Activated CD8-positive, alpha-beta memory T cell treated with anti-CD3 and anti-CD28 coated beads, Interleukin-2, amount 10 ng/mL, durations not matched to agents 7 days and 5 days (primary cell): ENCODE measurements at regions of chr20 and their contacts with region 1.

Region 1: DNA sequence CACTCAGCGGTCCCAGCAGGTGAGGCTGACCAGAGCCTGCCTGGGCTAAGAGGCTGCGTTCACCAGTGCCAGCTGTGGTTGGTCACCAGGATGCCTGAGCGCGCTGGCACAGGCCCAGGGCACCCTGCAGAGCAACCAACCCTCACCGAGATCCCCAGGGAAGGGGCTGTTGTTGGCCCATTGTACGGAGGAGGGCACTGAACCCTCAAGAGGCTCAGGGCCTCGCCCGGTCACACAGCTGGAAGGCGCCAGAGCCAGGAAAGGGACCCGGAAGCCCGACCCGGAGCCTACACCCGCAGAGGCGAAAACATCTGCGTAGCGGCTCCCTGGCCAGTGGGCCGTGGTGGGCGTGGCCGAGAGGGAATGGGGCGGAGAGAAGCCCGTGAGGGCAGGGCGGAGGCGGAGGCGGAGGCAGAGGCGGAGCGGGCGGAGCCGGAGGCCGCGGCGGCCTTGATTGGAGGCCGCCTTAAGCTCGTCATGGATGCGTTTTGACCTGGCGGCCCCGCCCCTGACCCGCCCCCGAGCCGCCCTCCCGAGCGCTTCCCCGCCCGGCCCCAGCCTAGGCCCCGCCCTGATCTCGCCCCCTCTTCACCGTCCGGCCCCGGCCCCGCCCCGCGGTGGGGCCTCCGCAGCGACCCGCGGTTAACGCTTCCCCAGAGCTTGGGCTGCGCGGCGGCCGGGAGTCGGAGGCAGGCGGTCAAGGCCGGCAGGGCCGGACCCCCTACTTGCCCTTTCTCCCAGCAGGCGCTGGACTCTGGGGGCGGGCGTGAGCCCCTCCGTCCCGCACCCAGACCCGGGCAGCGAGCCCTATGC is 2.2 kb upstream of the MRGBP start:
- DNase-seq: peak; percentile 98
- ATAC-seq: peak; percentile 82
- H3K4me3 Mint-ChIP-seq: peak overlapping the region; percentile 77
- H3K27ac Mint-ChIP-seq: peak overlapping the region; percentile 90
- H3K4me1 Mint-ChIP-seq: peaks cover 32% of the 10 kb centered on the region
- H3K27me3 Mint-ChIP-seq: no peaks in the 10 kb centered on the region

Region 2: DNA sequence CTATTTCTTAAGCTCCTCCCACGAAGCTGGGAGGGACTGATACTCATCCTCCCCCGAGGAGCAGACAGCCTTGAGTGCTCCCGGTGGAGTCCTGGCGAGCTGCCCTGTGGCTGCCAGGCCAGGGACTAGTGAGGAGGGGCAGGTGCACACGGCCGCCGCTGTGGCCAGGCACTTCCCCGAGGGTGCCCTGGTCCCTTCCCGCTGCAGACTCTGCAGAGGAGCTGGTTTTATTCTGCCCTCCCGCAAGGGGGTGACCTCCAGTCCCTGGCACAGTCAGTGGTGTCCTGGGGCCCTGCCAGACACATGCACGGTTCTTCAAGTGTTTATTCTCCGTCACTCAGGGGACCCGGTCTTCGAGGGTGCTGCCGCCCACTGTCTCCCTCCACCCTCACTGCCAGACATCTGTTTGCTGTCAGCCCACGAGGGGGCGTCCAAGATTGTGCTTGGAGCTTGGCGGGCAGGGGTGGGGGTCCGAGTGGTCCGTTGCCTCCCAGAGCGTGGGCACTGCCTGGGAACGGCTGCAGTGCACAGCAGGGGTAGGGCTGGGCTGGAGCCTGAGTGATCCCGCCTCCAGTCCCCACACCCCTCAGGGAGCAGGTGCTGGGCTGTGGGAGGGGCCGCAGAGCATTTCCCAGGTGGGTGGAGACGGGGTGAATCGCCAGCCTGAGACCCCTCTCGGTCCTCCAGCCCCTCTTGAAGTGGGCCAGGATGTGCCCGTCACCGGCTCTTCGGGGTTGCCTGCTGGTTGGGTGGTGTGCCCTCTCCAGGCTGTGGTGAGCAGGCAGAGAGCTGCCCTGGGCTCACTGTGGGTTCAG is 384.0 kb before region 1 on chr20:
- CTCF ChIA-PET with region 1: interaction called, 12 read pairs
- DNase-seq: no peak
- ATAC-seq: no peak
- H3K4me3 Mint-ChIP-seq: no peak overlapping the region
- H3K27ac Mint-ChIP-seq: no peak overlapping the region
- H3K4me1 Mint-ChIP-seq: peaks cover 23% of the 10 kb centered on the region
- H3K27me3 Mint-ChIP-seq: peaks cover 4% of the 10 kb centered on the region

Region 3: DNA sequence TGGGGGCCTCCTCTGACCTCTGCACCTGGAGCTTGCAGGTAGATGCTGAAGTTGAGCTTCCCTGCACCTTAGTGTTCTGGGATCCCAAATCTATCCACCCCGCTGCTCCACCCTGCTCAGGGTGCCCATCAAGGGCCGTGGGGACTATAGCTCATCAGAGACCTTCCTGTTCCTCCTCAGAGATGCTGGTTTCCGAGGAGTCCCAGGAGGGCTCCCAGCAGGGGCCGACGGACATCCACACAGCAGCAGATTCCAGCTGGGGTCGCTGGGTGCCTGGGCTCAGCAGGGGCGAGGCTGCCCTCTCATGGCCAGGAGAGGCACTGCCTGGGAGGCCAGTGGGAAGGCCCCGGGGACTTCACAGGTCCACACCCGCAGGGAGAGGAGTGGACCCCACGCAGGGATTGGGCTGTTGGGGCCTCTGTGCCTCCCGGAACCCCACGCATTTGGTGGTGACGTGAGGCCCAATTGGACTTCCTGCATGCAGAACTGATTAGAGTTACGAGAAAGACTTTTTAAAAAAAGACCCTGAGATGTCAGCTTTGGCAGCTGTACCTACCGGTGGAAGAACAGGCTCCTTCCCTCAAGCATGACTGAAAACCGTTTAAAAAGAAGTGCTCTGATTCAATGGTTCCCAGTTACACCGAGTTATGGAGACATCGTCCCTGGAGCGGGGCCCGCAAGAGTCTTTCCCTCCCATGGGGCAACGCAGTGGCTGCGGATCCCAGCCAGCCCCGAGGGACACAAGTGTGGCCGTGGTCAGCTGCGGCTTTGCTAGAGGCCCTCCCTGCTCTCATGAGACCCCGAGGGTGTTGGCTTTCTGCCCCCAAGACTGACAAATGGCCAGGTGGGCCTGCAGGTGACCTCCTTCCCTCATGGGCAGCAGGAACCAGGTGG is 177.1 kb before region 1 on chr20:
- CTCF ChIA-PET with region 1: interaction called, 11 read pairs
- DNase-seq: peak; percentile 85
- ATAC-seq: peak; percentile 65
- H3K4me3 Mint-ChIP-seq: no peak overlapping the region
- H3K27ac Mint-ChIP-seq: peak overlapping the region; percentile 98
- H3K4me1 Mint-ChIP-seq: peaks cover 36% of the 10 kb centered on the region
- H3K27me3 Mint-ChIP-seq: peaks cover 8% of the 10 kb centered on the region

Region 4: DNA sequence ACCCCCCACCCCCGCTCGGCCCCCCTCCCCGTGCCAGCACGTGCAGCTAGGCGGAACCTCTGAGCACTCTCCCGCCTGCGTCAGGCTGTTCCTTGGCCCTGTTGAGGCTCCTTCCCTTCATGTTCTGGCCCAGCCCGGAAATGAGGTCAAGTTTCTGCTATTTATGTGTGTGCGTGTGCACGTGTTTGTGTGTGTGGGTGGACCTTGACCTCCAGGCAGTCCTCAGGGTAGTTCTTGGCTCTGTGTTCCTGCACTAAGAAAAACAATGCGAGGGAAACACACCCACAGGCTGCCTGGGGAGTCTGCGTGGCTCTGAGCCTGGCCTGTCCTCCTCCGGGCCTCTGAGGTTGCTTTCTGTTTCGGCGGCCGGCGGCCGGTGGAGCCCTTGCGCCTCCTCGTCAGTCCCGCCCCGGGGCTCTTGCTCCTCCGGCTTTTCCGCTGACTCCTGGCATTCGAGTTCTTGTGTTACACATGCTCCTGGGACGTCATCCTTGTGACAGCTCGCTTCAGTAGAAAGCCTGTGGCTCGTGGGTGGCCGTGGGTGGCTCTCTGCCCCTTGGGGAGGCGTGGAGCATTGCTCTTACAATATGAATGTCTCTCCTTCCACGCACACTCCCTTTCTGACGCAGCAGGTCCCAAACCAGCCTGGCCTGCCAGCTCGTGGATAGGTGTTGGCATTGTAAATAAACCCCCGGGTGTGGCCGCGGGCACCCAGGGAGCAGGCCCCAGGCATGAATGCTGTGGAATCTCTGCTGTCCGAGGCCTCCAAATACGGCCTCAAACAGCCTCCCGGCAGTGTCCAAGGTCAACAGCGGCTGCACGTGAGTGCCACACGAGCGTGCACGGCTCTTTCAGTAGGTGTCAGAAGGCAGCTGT is 141.8 kb before region 1 on chr20:
- CTCF ChIA-PET with region 1: interaction called, 15 read pairs
- DNase-seq: peak; percentile 88
- ATAC-seq: peak; percentile 64
- H3K4me3 Mint-ChIP-seq: peak overlapping the region; percentile 75
- H3K27ac Mint-ChIP-seq: peak overlapping the region; percentile 96
- H3K4me1 Mint-ChIP-seq: peaks cover 60% of the 10 kb centered on the region
- H3K27me3 Mint-ChIP-seq: no peaks in the 10 kb centered on the region

Region 5: DNA sequence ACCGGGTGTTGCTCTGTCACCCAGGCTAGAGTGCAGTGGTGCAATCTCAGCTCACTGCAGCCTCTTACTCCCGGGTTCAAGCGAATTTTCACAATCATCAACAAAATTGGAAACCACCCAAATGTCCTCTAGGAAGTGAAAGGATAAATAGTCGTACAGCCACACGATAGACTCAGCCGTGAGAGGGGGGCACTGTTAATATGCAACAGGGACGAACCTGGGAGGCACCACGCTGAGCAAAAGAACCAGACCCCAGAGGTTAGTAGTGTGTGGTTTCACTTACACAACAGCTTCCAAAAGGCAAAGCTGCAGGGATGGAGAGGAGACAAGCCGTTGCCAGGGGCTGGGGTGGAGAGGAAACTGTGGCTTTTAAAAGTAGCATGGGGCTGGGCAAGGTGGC is 115.6 kb before region 1 on chr20:
- CTCF ChIA-PET with region 1: interaction called, 23 read pairs
- DNase-seq: no peak
- ATAC-seq: peak; percentile 46
- H3K4me3 Mint-ChIP-seq: no peak overlapping the region
- H3K27ac Mint-ChIP-seq: no peak overlapping the region
- H3K4me1 Mint-ChIP-seq: peaks cover 15% of the 10 kb centered on the region
- H3K27me3 Mint-ChIP-seq: no peaks in the 10 kb centered on the region

Region 6: DNA sequence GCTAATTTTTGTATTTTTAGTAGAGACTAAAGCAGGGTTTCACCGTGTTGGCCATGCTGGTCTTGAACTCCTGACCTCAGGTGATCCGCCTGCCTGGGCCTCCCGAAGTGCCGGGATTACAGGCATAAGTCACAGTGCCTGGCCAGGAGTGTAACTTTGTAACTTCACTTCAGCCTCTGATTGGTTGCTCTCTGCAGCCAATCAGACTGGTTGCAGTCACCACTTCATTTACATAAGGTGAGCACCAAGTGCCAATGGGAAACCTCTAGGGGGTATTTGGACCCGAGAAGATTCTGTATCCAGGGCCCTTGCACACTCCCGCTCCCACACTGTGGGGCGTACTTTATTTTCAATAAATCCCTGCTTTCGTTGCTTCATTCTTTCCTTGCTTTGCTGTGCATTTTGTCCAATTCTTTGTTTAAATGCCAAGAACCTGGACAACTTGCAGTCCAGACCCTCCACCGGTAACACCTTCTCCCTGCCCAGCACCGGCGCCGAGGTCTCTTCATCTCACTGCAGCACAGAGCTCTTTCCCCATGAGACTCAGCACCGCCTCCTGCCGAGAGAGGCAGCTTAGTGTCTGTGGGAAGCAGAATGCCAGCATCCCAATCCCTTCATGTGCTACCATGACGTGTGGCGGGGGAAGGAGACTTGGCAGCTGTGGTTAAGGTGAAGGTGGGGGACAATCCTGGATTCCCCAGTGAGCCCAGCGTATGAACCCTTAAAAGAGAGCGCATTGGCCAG is 11.8 kb before region 1 on chr20:
- CTCF ChIA-PET with region 1: interaction called, 12 read pairs
- DNase-seq: no peak
- ATAC-seq: no peak
- H3K4me3 Mint-ChIP-seq: no peak overlapping the region
- H3K27ac Mint-ChIP-seq: no peak overlapping the region
- H3K4me1 Mint-ChIP-seq: peaks cover 12% of the 10 kb centered on the region
- H3K27me3 Mint-ChIP-seq: no peaks in the 10 kb centered on the region

Region 7: DNA sequence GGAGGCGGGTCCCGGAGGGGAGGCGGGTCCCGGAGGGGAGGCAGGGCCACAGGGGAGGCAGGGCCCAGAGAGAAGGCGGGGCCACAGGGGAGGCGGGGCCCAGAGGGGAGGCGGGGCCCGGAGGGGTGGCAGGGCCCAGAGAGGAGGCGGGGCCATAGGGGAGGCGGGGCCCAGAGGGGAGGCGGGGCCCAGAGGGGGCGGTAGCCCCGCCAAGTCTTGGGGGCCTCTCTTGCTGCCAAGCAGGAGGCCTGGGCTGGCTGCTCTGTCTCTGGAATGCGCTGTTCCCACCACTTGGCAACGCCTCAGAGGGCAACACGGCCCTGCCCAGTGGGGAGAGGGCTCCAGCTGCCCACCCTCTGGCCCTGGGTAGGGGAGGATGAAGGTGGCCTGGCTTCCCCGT is 341.3 kb after region 1 on chr20:
- CTCF ChIA-PET with region 1: no interaction called
- DNase-seq: no peak
- ATAC-seq: peak; percentile 40
- H3K4me3 Mint-ChIP-seq: no peak overlapping the region
- H3K27ac Mint-ChIP-seq: no peak overlapping the region
- H3K4me1 Mint-ChIP-seq: no peaks in the 10 kb centered on the region
- H3K27me3 Mint-ChIP-seq: no peaks in the 10 kb centered on the region